ENCODE measurements at regions of chr16 and their contacts with region 1.

Region 1: DNA sequence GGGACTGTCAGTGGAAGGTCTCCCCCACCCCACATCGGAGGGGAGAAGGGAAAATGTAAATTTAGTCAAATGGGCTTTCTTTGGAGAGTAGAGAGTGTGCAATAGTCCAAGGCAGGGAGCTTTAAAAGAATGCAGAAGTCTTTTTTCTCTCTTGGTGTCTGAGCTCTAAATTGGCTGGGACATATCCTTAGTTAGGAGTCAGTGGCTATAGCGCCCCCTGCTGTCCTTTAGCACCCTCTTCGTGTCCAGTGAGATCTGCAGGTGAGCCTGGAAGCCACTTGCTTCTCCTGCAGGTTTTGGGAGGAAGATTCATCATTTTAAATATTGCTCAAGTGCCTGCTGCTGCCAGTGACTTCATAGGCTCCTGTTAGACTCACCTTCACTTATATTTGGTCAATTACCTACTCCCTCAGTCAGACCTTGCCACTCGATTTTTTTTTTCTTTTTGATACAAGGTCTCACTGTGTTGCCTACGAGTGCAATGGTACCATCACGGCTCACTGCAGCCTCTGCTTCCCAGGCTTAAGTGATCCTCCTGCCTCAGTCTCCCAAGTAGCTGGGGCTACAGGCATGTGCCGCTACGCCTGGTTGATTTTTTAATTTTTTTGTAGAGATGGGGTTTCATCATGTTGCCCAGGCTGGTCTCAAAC is 174.8 kb downstream of the PRKCB start:
- DNase-seq: peak; percentile 60 to 92 (median 76)
- ATAC-seq: no peak
- H3K4me3 Mint-ChIP-seq: peak overlapping the region in 3 of 10 donors; percentile 6 to 30 (median 12)
- H3K27ac Mint-ChIP-seq: peak overlapping the region in 7 of 10 donors; percentile 35 to 90 (median 54)
- H3K4me1 Mint-ChIP-seq: peaks cover 39 to 93% (median 80%) of the 10 kb centered on the region in 4 donors
- H3K27me3 Mint-ChIP-seq: no peaks in the 10 kb centered on the region

Region 2: GRCh38 chr16:23803591-23804123 is 206.9 kb before region 1 on chr16:
- POLR2A ChIA-PET with region 1: interaction called, 10 read pairs
- DNase-seq: peak; percentile 45 to 82 (median 65)
- ATAC-seq: peak; percentile 96 to 98
- H3K4me3 Mint-ChIP-seq: peak overlapping the region in 7 of 10 donors; percentile 0 to 38 (median 12)
- H3K27ac Mint-ChIP-seq: peak overlapping the region in 3 of 10 donors; percentile 1 to 56 (median 20)
- H3K4me1 Mint-ChIP-seq: peaks cover 7 to 21% (median 13%) of the 10 kb centered on the region in 4 donors
- H3K27me3 Mint-ChIP-seq: peaks cover 0 to under 1% (median 0%) of the 10 kb centered on the region in 5 donors

Region 3: GRCh38 chr16:24036614-24037013 is 26.0 kb after region 1 on chr16:
- POLR2A ChIA-PET with region 1: interaction called, 47 read pairs
- DNase-seq: peak in 9 of 10 donors; percentile 12 to 69 (median 45)
- ATAC-seq: peak; percentile 36 to 47
- H3K4me3 Mint-ChIP-seq: peak overlapping the region; percentile 51 to 95 (median 76)
- H3K27ac Mint-ChIP-seq: peak overlapping the region in 9 of 10 donors; percentile 34 to 91 (median 77)
- H3K4me1 Mint-ChIP-seq: peaks cover 26 to 60% (median 55%) of the 10 kb centered on the region in 4 donors
- H3K27me3 Mint-ChIP-seq: no peaks in the 10 kb centered on the region

Region 4: GRCh38 chr16:24069036-24069590 is 58.5 kb after region 1 on chr16:
- POLR2A ChIA-PET with region 1: no interaction called
- DNase-seq: no peak
- ATAC-seq: no peak
- H3K4me3 Mint-ChIP-seq: no peak overlapping the region
- H3K27ac Mint-ChIP-seq: peak overlapping the region in 3 of 10 donors; percentile 16 to 73 (median 19)
- H3K4me1 Mint-ChIP-seq: peaks cover 14 to 40% (median 33%) of the 10 kb centered on the region in 4 donors
- H3K27me3 Mint-ChIP-seq: no peaks in the 10 kb centered on the region